ENCODE measurements at regions of chr5 and their contacts with region 1.

Region 1: GRCh38 chr5:99032234-99033013 is 103.6 kb upstream of the CHD1 start:
- DNase-seq: no peak
- ATAC-seq: peak; percentile 32
- H3K4me3 Mint-ChIP-seq: peak overlapping the region; percentile 81
- H3K27ac Mint-ChIP-seq: peak overlapping the region; percentile 84
- H3K4me1 Mint-ChIP-seq: peaks cover 85% of the 10 kb centered on the region
- H3K27me3 Mint-ChIP-seq: no peaks in the 10 kb centered on the region
- CTCF ChIP-seq: no peak

Region 2: DNA sequence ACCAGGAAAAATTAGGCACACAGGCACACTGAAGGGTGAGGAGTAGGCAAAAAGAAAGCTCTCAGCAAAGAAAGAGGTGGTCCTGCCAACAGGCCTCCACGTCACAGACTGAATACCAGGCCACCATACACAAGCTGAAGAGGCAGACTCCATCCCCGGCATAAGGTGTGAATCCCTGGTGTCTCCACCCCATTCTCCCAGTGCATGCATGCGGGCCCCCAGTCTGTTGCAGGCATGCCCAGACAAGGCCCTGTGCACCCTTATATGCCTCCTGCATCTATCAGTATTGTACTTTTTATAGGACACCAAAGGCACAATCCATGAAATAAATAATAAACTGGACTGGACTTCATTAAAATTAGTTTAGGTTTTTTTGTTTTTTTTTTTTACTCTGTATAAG is 185.9 kb before region 1 on chr5:
- CTCF ChIA-PET with region 1: no interaction called
- POLR2A ChIA-PET with region 1: no interaction called
- intact Hi-C with region 1: no loop called
- DNase-seq: no peak
- ATAC-seq: no peak
- H3K4me3 Mint-ChIP-seq: no peak overlapping the region
- H3K27ac Mint-ChIP-seq: no peak overlapping the region
- H3K4me1 Mint-ChIP-seq: no peaks in the 10 kb centered on the region
- H3K27me3 Mint-ChIP-seq: no peaks in the 10 kb centered on the region
- CTCF ChIP-seq: no peak

Region 3: GRCh38 chr5:98905857-98906690 is 126.3 kb before region 1 on chr5:
- CTCF ChIA-PET with region 1: interaction called, 57 read pairs
- POLR2A ChIA-PET with region 1: interaction called, 3 read pairs
- intact Hi-C with region 1: loop called (anchors 1 kb)
- DNase-seq: no peak
- ATAC-seq: peak; percentile 69
- H3K4me3 Mint-ChIP-seq: no peak overlapping the region
- H3K27ac Mint-ChIP-seq: peak overlapping the region; percentile 1
- H3K4me1 Mint-ChIP-seq: peaks cover 34% of the 10 kb centered on the region
- H3K27me3 Mint-ChIP-seq: no peaks in the 10 kb centered on the region
- CTCF ChIP-seq: peak; percentile 94

Region 4: GRCh38 chr5:98921947-98922505 is 110.4 kb before region 1 on chr5:
- CTCF ChIA-PET with region 1: interaction called, 13 read pairs
- POLR2A ChIA-PET with region 1: interaction called, 179 read pairs
- intact Hi-C with region 1: no loop called
- DNase-seq: no peak
- ATAC-seq: no peak
- H3K4me3 Mint-ChIP-seq: no peak overlapping the region
- H3K27ac Mint-ChIP-seq: peak overlapping the region; percentile 50
- H3K4me1 Mint-ChIP-seq: peaks cover 68% of the 10 kb centered on the region
- H3K27me3 Mint-ChIP-seq: no peaks in the 10 kb centered on the region
- CTCF ChIP-seq: no peak

Region 5: GRCh38 chr5:99068944-99069650 is 36.7 kb after region 1 on chr5:
- CTCF ChIA-PET with region 1: no interaction called
- POLR2A ChIA-PET with region 1: no interaction called
- intact Hi-C with region 1: no loop called
- DNase-seq: no peak
- ATAC-seq: no peak
- H3K4me3 Mint-ChIP-seq: no peak overlapping the region
- H3K27ac Mint-ChIP-seq: no peak overlapping the region
- H3K4me1 Mint-ChIP-seq: peaks cover 5% of the 10 kb centered on the region
- H3K27me3 Mint-ChIP-seq: no peaks in the 10 kb centered on the region
- CTCF ChIP-seq: no peak

Region 6: GRCh38 chr5:99122976-99123375 is 90.6 kb after region 1 on chr5:
- CTCF ChIA-PET with region 1: no interaction called
- POLR2A ChIA-PET with region 1: no interaction called
- intact Hi-C with region 1: no loop called
- DNase-seq: no peak
- ATAC-seq: no peak
- H3K4me3 Mint-ChIP-seq: no peak overlapping the region
- H3K27ac Mint-ChIP-seq: no peak overlapping the region
- H3K4me1 Mint-ChIP-seq: no peaks in the 10 kb centered on the region
- H3K27me3 Mint-ChIP-seq: no peaks in the 10 kb centered on the region
- CTCF ChIP-seq: no peak